MCF 10A (cell line): ENCODE measurements at regions of chr17 and their contacts with region 1.

Region 1: GRCh38 chr17:20955427-20956323 is 87.1 kb downstream of the USP22 start:
- DNase-seq: peak; percentile 77
- H3K4me3 Mint-ChIP-seq: no peak overlapping the region
- H3K27ac Mint-ChIP-seq: no peak overlapping the region
- H3K4me1 Mint-ChIP-seq: peaks cover 20% of the 10 kb centered on the region
- H3K27me3 Mint-ChIP-seq: no peaks in the 10 kb centered on the region
- CTCF ChIP-seq: no peak

Region 2: GRCh38 chr17:20944014-20944865 is 11.4 kb before region 1 on chr17:
- CTCF ChIA-PET with region 1: interaction called, 21 read pairs
- POLR2A ChIA-PET with region 1: interaction called, 7 read pairs
- intact Hi-C with region 1: no loop called
- DNase-seq: peak; percentile 69
- H3K4me3 Mint-ChIP-seq: no peak overlapping the region
- H3K27ac Mint-ChIP-seq: peak overlapping the region; percentile 27
- H3K4me1 Mint-ChIP-seq: peaks cover 12% of the 10 kb centered on the region
- H3K27me3 Mint-ChIP-seq: no peaks in the 10 kb centered on the region
- CTCF ChIP-seq: peak; percentile 65